Left colon (tissue), 2 donors: ENCODE measurements at regions of chr9 and their contacts with region 1.

Region 1: DNA sequence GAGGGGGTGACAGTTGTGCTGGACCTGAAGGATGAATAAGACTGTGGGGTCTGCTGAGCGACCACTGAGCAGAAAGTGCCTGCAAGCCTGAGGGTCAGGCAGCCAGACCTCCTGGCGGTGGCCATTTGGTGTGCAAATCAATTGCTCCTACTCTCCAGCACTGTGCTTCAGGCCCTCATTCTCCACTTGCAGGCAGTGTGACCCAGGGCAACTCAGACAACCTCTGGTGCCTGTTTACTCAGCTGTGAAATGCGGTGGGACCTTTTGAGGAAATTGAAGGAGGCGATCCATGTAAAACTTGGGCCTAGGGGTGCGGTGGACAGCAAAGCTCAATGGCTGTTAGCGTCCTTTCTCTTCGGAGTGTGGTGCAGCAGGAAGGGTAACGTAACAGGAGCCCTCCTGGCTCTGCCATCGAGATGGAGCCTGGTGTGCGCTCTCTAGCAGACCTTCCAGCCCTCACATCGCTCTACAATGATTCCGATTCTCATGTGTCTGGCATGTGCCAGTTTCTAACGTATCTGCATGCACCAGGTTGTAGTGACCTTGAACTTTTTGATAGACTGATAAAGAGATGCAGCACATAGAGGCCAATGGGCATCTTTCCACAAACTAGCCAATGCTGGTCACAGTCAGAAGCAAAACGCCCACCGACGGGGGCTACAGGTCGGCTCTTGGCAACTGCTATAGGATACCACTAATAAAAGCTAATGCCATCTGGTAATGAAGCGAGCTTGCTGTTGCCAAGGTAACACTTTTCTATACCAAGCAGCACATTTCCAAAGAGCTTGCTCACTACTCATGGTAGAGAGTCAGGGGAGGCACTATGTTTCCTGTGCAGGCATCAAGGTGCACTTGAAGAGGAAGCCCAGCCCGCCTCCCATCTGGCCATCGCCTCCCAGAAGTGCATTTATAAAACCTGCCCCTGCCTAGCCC is 159.7 kb upstream of the RAPGEF1 start:
- DNase-seq: no peak
- ATAC-seq: no peak

Region 2: GRCh38 chr9:131999692-132000551 is 100.4 kb after region 1 on chr9:
- intact Hi-C with region 1: no loop called
- DNase-seq: no peak
- ATAC-seq: no peak

Region 3: DNA sequence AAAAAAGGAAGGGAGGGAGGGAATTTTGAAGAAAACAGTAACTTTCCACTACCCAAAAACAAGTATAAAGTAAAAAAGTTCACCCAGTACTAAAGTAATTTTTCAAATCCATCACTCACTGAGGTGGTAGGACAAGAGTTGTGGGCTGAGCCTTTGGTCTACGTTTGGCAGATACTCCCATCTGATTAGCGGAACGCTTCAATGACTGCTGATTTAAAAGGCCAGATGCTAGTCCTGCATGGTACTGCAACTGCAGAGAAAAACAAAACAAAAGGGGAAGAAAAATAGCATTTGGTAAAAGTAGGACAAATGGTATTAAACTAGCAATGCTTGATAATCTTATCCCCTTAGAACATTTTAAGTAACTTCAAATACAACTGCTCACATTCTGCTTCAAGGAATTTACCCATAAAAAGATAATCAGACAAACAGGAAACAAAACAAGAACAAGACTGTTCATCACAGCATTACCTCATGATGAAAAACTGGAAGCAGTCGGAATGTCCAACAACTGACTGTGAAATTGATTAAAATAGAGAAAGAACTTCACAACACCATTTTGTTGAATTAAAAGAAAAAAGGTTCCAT is 114.8 kb after region 1 on chr9:
- intact Hi-C with region 1: loop called in 1 of 2 experiments (anchors 5 kb)
- DNase-seq: no peak
- ATAC-seq: no peak